Cardiac septum (tissue), 1 donor: ENCODE measurements at regions of chr21 and their contacts with region 1.

Region 1: DNA sequence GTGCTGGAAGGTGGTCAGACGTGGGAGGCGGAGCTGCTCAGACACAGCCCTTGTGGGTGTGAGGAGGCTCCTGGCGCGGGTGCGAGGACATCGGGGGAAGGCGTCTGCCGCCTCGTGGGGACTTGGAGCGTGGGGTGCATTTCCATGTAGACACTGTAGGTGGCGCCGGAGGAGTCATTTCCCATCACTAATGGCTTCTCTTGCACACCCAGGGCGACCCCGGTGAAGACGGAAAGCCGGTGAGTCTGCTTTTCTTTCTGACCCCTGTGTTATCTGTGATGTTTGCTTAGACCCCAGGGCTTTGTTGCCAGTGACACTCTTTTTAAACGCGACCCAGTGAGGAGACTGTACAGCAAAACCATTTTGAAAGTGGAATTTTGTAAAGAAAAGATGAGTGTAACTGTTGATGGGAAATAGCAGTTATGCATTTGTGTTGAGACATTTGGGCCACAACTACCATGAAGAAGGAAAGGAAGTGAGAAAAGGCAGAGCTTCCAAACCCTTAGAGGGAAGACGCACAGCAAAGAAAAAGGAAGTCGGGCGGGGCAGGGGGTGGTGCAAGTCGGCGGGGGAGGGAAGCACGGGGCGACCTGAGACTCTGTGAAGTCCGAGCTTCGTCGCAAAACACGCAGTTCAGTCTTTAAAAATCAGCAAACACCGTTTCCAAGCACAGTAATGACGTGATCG is 64.0 kb downstream of the SLC19A1 start:
- DNase-seq: peak; percentile 90

Region 2: GRCh38 chr21:45064618-45065399 is 413.4 kb before region 1 on chr21:
- intact Hi-C with region 1: no loop called
- DNase-seq: no peak

Region 3: GRCh38 chr21:45404730-45405270 is 73.5 kb before region 1 on chr21 and contains the start of gene COL18A1:
- intact Hi-C with region 1: no loop called
- DNase-seq: no peak
- total RNA-seq, gene COL18A1: 77.0 TPM

Region 4: GRCh38 chr21:45542242-45542666 is 64.0 kb after region 1 on chr21 and contains the start of gene SLC19A1:
- intact Hi-C with region 1: loop called (anchors 5 kb)
- DNase-seq: peak; percentile 90
- total RNA-seq, gene SLC19A1: 2.7 TPM

Region 5: DNA sequence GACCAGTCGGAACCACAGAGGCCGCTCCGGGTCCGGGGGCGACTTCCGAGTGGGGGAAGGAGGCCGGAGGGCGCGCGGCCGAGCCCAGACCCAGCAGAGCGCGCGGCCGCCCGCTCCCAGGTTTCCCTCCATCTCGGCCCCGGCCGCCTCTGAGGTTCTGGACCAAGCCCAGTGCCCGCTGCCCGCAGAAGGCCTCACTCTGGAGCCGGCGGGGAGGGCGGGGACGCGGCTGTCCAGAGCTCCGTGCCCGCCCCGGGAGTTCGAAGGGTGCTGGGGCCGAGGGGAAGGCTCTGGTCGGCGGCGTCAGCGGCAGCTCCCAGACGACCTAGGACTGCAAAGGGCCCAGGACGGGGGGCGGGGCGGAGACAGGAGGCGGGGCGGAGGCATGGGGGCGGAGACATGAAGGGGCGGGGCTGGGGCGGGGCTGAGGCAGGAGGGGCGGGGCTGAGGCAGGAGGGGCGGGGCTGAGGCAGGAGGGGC is 112.0 kb after region 1 on chr21:
- intact Hi-C with region 1: loop called (anchors 5 kb)
- DNase-seq: peak; percentile 90